ENCODE measurements at regions of chrX and their contacts with region 1.

Region 1: GRCh38 chrX:136711147-136711546 is 63.2 kb downstream of the CD40LG start:
- DNase-seq: no peak
- ATAC-seq: peak; percentile 64

Region 2: GRCh38 chrX:136674270-136674985 is 36.7 kb before region 1 on chrX:
- intact Hi-C with region 1: no loop called
- DNase-seq: no peak
- ATAC-seq: no peak

Region 3: GRCh38 chrX:136767104-136767941 is 56.2 kb after region 1 on chrX:
- intact Hi-C with region 1: loop called (anchors 10 kb)
- DNase-seq: peak; percentile 87
- ATAC-seq: peak; percentile 90

Region 4: GRCh38 chrX:136866337-136867095 is 155.4 kb after region 1 on chrX:
- intact Hi-C with region 1: loop called (anchors 10 kb)
- DNase-seq: no peak
- ATAC-seq: peak; percentile 27

Region 5: DNA sequence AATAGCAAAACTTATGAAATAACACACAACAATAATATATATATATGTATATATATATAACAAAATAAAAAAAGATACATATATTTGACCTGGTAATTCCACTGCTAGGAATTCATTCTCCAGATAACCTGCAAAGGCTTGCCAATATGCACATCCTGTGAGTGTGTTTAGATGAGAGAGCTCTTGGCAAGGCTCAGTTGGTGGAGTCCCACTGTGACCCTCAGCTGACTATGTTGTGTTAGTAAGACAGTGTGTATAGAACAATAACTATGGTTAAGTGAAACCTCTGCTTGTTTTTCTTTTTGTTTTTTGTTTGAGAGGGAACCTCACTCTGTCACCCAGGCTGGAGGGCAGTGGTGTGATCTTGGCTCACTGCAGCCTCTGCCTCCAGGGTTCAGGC is 208.9 kb after region 1 on chrX:
- intact Hi-C with region 1: loop called (anchors 2 kb)
- DNase-seq: no peak
- ATAC-seq: no peak